ENCODE measurements at regions of chr19 and their contacts with region 1.

Region 1: DNA sequence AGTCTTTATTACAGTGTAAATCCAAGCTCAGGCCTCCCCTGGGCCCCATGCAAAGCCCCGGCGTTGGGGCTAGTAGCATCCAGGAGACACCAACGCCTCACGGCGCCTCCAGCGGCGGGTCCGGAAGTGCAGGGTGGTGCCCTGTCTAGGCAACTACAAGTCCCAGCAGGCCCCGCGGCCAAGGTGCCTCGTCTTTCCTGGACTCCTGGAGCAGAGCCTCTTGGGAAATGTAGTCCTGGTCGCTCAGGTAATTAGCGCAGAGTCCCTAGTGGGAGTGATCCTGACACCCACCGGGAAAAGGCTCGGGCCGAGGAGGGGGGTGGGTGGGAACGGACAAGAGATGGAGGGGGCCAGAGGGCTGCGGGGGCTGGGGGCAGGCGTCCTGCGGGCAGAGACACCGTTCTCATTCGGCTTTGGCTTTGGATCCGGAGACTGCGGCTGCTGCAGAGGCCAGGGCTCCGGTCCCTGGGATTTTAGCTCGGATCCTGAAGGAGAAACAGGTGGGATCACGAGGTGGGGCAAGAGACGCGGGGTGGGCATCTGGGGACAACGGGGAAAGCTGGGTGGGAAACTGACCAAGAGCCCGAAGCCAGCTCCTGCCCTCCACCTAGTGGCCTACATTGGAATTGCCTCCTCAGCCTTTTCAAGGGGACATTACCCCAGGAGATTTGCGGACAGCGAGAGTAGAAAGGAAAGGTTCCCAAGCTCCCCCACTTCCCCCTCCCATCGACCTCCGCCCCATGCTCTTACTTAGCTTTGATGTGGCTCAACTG is 11.4 kb downstream of the RTN2 start:
- DNase-seq: peak; percentile 96
- H3K4me3 Mint-ChIP-seq: peak overlapping the region; percentile 87
- H3K27ac Mint-ChIP-seq: peak overlapping the region; percentile 79
- H3K4me1 Mint-ChIP-seq: peaks cover 6% of the 10 kb centered on the region
- H3K27me3 Mint-ChIP-seq: peaks cover 6% of the 10 kb centered on the region

Region 2: DNA sequence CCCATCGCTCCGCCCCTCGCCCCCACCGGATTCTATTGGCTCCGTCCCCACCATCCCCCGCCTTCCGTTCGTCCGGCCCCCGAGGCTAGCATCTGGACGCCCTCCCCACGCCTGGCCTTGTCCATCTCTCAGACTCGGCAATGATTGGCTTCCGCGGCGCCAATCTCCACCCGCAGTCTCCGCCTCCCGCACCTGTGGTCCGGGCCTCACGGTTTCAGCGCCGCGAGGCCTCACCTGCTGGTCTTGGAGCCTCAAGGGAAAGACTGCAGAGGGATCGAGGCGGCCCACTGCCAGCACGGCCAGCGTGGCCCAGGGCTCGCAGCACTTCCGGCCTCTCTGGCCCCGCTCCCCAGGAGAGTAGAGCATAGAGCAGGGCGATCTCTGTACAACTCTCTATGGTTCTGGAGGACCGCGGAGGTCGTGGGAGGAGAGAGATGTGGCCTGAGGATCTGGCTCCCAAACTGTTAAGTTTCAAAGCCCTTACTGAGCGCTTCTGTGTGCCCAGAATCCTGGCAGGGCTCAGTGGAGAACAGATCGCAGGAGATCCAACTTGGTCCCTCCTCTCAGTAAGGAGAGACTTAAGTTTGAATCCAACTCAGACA is 61.8 kb before region 1 on chr19 and contains the start of gene ERCC1:
- intact Hi-C with region 1: loop called (anchors 1 kb)
- DNase-seq: peak; percentile 82
- H3K4me3 Mint-ChIP-seq: peak within 1 kb of the TSS; percentile 97
- H3K27ac Mint-ChIP-seq: peak within 1 kb of the TSS; percentile 95
- H3K4me1 Mint-ChIP-seq: peaks cover 50% of the 10 kb centered on the region
- H3K27me3 Mint-ChIP-seq: peaks cover 9% of the 10 kb centered on the region
- total RNA-seq, gene ERCC1: 143 and 152 TPM in 2 replicates